ENCODE measurements at regions of chr2 and their contacts with region 1.

Region 1: GRCh38 chr2:106098081-106098480 is 96.0 kb downstream of the UXS1 start:
- DNase-seq: peak in 4 of 9 experiments; percentile 25 to 56 (median 43)
- ATAC-seq: no peak
- H3K4me3 ChIP-seq: no peak overlapping the region
- H3K4me3 Mint-ChIP-seq: no peak overlapping the region
- H3K27ac ChIP-seq: no peak overlapping the region
- H3K27ac Mint-ChIP-seq: peak overlapping the region; percentile 95
- H3K4me1 ChIP-seq: peaks cover 53% of the 10 kb centered on the region
- H3K4me1 Mint-ChIP-seq: peaks cover 62% of the 10 kb centered on the region
- H3K27me3 ChIP-seq: no peaks in the 10 kb centered on the region
- H3K27me3 Mint-ChIP-seq: no peaks in the 10 kb centered on the region
- CTCF ChIP-seq: peak; percentile 16

Region 2: GRCh38 chr2:104092886-104093285 is 2005.2 kb before region 1 on chr2:
- CTCF ChIA-PET with region 1: no interaction called
- POLR2A ChIA-PET with region 1: no interaction called
- intact Hi-C with region 1: no loop called
- DNase-seq: no peak
- ATAC-seq: no peak
- H3K4me3 ChIP-seq: no peak overlapping the region
- H3K4me3 Mint-ChIP-seq: no peak overlapping the region
- H3K27ac ChIP-seq: no peak overlapping the region
- H3K27ac Mint-ChIP-seq: no peak overlapping the region
- H3K4me1 ChIP-seq: no peaks in the 10 kb centered on the region
- H3K4me1 Mint-ChIP-seq: no peaks in the 10 kb centered on the region
- H3K27me3 ChIP-seq: no peaks in the 10 kb centered on the region
- H3K27me3 Mint-ChIP-seq: no peaks in the 10 kb centered on the region
- CTCF ChIP-seq: no peak

Region 3: GRCh38 chr2:105337124-105338019 is 760.7 kb before region 1 on chr2 and contains the start of gene C2orf49:
- CTCF ChIA-PET with region 1: no interaction called
- POLR2A ChIA-PET with region 1: interaction called, 3 read pairs
- intact Hi-C with region 1: loop called (anchors 10 kb)
- DNase-seq: peak; percentile 76 to 94 (median 90)
- ATAC-seq: peak; percentile 91
- H3K4me3 ChIP-seq: peak within 1 kb of the TSS; percentile 83 to 92
- H3K4me3 Mint-ChIP-seq: peak within 1 kb of the TSS; percentile 100
- H3K27ac ChIP-seq: peak within 1 kb of the TSS; percentile 96 to 98
- H3K27ac Mint-ChIP-seq: peak within 1 kb of the TSS; percentile 100
- H3K4me1 ChIP-seq: peaks cover 18% of the 10 kb centered on the region
- H3K4me1 Mint-ChIP-seq: peaks cover 32% of the 10 kb centered on the region
- H3K27me3 ChIP-seq: no peaks in the 10 kb centered on the region
- H3K27me3 Mint-ChIP-seq: no peaks in the 10 kb centered on the region
- CTCF ChIP-seq: no peak
- total RNA-seq, gene C2orf49: 27.8 to 28.9 TPM

Region 4: GRCh38 chr2:105737980-105738657 is 360.0 kb before region 1 on chr2:
- CTCF ChIA-PET with region 1: interaction called, 5 read pairs
- POLR2A ChIA-PET with region 1: interaction called, 5 read pairs
- intact Hi-C with region 1: loop called in 1 of 2 experiments (anchors 2 kb)
- DNase-seq: peak in 3 of 9 experiments; percentile 51 to 84 (median 71)
- ATAC-seq: peak; percentile 85
- H3K4me3 ChIP-seq: peak overlapping the region; percentile 21 to 36
- H3K4me3 Mint-ChIP-seq: peak overlapping the region; percentile 74
- H3K27ac ChIP-seq: peak overlapping the region; percentile 63 to 86
- H3K27ac Mint-ChIP-seq: peak overlapping the region; percentile 95
- H3K4me1 ChIP-seq: peaks cover 56% of the 10 kb centered on the region
- H3K4me1 Mint-ChIP-seq: peaks cover 85% of the 10 kb centered on the region
- H3K27me3 ChIP-seq: no peaks in the 10 kb centered on the region
- H3K27me3 Mint-ChIP-seq: no peaks in the 10 kb centered on the region
- CTCF ChIP-seq: no peak

Region 5: DNA sequence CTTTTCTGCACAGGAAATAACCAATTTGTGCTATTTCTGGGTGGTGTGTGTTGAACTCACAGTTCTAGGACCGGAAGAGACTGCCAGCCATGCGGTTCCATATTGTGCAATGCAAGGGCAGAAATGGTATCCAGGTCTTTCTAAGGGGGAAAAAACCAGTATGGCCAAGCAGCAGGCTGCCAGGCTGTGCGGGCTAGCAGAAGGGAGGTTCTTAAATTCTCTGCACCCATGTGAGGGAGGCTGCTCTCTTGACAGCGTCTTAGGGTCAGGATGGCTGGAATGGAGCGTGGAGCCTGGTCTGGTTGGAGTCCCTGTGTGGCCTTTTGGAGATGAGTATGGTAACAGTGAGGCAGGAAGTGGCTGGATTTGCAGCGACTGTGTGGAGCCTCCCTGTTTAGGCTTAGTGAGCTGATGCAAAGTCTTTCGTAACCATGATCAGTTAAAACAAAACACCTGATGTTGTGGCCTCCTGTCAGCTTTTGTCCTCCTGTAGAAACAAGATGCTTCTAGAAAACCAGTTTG is 300.7 kb before region 1 on chr2:
- CTCF ChIA-PET with region 1: interaction called, 8 read pairs
- POLR2A ChIA-PET with region 1: interaction called, 21 read pairs
- intact Hi-C with region 1: loop called (anchors 2 to 5 kb)
- DNase-seq: peak in 5 of 9 experiments; percentile 42 to 84 (median 65)
- ATAC-seq: peak; percentile 17
- H3K4me3 ChIP-seq: peak overlapping the region in 1 of 2 experiments; percentile 31
- H3K4me3 Mint-ChIP-seq: peak overlapping the region; percentile 74
- H3K27ac ChIP-seq: peak overlapping the region; percentile 51 to 88
- H3K27ac Mint-ChIP-seq: peak overlapping the region; percentile 96
- H3K4me1 ChIP-seq: peaks cover 92% of the 10 kb centered on the region
- H3K4me1 Mint-ChIP-seq: peaks cover 96% of the 10 kb centered on the region
- H3K27me3 ChIP-seq: no peaks in the 10 kb centered on the region
- H3K27me3 Mint-ChIP-seq: no peaks in the 10 kb centered on the region
- CTCF ChIP-seq: no peak

Region 6: GRCh38 chr2:105929516-105929915 is 168.6 kb before region 1 on chr2:
- CTCF ChIA-PET with region 1: interaction called, 11 read pairs
- POLR2A ChIA-PET with region 1: interaction called, 9 read pairs
- intact Hi-C with region 1: loop called in 1 of 2 experiments (anchors 5 kb)
- DNase-seq: peak in 8 of 9 experiments; percentile 26 to 81 (median 56)
- ATAC-seq: peak; percentile 79
- H3K4me3 ChIP-seq: no peak overlapping the region
- H3K4me3 Mint-ChIP-seq: peak overlapping the region; percentile 59
- H3K27ac ChIP-seq: peak overlapping the region; percentile 3 to 49
- H3K27ac Mint-ChIP-seq: peak overlapping the region; percentile 95
- H3K4me1 ChIP-seq: peaks cover 90% of the 10 kb centered on the region
- H3K4me1 Mint-ChIP-seq: peaks cover 88% of the 10 kb centered on the region
- H3K27me3 ChIP-seq: no peaks in the 10 kb centered on the region
- H3K27me3 Mint-ChIP-seq: no peaks in the 10 kb centered on the region
- CTCF ChIP-seq: no peak

Region 7: DNA sequence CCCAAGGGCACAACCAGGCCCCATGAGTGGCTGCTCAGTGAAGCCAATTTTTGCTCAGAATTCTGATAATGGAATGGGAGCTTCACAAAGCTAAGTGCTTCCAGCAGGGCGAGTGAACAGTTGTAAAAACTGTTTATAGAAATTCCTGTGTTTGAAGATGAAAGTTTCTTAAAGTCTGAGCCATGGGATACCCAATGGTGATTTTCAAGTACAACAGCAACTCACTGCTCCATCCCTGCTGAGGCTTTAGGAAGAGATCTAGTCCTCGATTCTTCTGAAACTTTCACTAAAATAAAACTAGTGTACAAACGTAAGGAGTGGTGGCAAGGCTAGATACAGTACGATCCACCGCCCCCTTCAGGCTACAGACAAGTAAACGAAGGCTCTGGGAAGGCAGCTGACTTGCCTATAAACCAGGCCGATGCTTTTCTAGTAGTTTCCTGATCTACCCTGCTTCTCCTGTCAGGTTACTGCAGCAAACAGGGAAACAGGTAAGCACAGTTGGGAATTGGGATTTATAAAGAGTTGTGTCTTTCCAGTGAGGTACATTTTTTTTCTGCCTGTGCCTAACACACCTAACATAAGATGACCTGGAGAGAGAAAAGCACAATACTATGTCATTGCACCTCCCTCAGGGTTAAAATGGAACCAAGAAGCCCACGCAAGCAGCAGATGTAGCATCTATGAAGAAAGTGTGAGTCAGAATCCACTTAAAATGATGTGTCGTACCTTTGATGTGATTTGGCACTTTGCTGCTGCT is 12.7 kb before region 1 on chr2:
- CTCF ChIA-PET with region 1: interaction called, 8 read pairs
- POLR2A ChIA-PET with region 1: interaction called, 13 read pairs
- intact Hi-C with region 1: loop called (anchors 1 kb)
- DNase-seq: peak in 7 of 9 experiments; percentile 44 to 81 (median 75)
- ATAC-seq: peak; percentile 94
- H3K4me3 ChIP-seq: peak overlapping the region in 1 of 2 experiments; percentile 5
- H3K4me3 Mint-ChIP-seq: peak overlapping the region; percentile 66
- H3K27ac ChIP-seq: peak overlapping the region; percentile 46 to 59
- H3K27ac Mint-ChIP-seq: peak overlapping the region; percentile 98
- H3K4me1 ChIP-seq: peaks cover 56% of the 10 kb centered on the region
- H3K4me1 Mint-ChIP-seq: peaks cover 72% of the 10 kb centered on the region
- H3K27me3 ChIP-seq: no peaks in the 10 kb centered on the region
- H3K27me3 Mint-ChIP-seq: no peaks in the 10 kb centered on the region
- CTCF ChIP-seq: peak; percentile 57

Region 8: GRCh38 chr2:107197594-107198294 is 1099.7 kb after region 1 on chr2:
- CTCF ChIA-PET with region 1: no interaction called
- POLR2A ChIA-PET with region 1: no interaction called
- intact Hi-C with region 1: no loop called
- DNase-seq: no peak
- ATAC-seq: no peak
- H3K4me3 ChIP-seq: no peak overlapping the region
- H3K4me3 Mint-ChIP-seq: no peak overlapping the region
- H3K27ac ChIP-seq: no peak overlapping the region
- H3K27ac Mint-ChIP-seq: no peak overlapping the region
- H3K4me1 ChIP-seq: no peaks in the 10 kb centered on the region
- H3K4me1 Mint-ChIP-seq: no peaks in the 10 kb centered on the region
- H3K27me3 ChIP-seq: no peaks in the 10 kb centered on the region
- H3K27me3 Mint-ChIP-seq: no peaks in the 10 kb centered on the region
- CTCF ChIP-seq: no peak